HCT116 (cell line): ENCODE measurements at regions of chr12 and their contacts with region 1.

Region 1: DNA sequence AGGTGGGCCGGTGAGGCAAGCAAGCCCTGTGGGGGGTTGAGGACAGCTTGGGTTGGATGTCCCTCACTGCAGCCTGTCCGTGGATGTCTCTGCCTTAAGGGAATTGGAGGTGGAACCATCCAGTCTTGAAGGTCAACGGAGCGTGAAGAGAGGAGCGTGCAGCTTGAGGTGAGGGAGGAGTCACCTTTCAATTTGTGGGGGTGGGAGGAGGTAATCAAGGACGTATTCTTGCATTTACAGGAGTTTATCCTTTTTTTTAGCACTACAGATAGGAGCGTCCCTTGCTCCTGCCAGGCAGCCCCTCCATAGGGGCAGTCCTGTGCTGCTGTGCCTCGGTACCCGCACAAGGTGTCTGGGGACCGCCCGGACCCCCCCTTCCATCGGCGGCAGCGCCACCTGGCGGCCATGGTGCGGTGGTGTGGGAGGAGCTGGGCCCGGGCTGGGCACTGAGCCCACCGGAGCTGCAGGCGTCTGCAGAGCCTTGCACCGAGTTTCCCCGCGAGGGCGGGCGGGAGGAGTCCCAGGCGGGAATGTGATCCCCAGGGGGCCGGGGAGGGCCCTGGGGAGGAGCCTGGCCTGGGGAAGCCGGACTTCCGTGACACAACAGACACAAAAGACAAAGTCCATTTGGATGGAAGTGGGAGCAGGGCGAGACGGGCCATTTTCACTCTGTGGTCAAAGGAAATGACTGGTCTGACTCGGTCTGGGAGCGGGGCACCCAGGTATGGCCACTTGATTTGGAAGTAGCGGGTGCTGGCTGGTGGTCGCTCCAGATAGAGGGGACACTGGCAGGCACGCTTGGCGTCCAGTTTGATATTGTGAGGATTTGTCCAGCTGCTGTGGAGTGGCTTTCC is 923 bp downstream of the DNAJC22 start:
- DNase-seq: peak; percentile 89
- ATAC-seq: peak; percentile 95
- H3K4me3 ChIP-seq: peak overlapping the region; percentile 73 to 80
- H3K27ac ChIP-seq: peak overlapping the region; percentile 80
- H3K4me1 ChIP-seq: peaks cover 37 to 46% of the 10 kb centered on the region in 2 experiments
- H3K27me3 ChIP-seq: no peaks in the 10 kb centered on the region
- CTCF ChIP-seq: peak in 2 of 3 experiments; percentile 88 to 96; a peak in 4 of 6 replicates
- POLR2A ChIP-seq: peak; percentile 57
- RAD21 ChIP-seq: no peak

Region 2: DNA sequence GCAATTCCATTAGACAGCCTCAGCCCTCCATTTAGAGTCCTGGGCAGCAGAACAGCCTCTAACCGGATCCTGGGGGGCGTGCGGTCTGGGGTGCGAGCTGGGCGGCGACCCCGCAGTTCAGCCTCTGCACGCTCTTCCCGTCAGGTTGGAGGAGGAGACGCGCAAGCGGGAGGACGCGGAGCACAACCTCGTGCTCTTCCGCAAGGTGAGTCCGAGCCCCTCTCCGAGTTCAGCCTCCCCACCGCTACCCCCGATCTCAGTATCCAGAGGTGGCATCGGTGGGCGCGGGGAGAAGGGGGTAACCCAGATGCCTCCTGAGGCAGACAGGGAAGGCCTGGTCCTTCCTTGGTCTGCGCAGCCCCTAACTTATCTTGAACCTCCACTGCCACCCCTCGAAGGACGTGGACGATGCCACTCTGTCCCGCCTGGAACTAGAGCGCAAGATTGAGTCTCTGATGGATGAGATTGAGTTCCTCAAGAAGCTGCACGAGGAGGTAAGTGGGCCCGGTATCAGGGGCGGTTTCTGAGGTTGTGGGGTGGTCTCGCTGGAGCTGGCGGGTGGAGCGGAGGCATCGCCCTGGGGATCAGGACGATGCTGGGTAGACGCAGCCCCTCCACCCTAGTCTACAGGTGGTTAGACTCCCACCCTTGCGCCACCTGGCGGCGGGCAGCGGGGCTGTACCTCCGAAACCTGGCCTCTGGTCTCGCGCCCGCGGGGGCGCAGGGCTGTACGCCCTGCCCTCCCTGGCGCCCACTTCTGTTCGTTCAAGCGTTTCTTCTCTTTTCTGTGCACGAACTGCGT is 51.4 kb before region 1 on chr12:
- CTCF ChIA-PET with region 1: interaction called, 44 read pairs
- POLR2A ChIA-PET with region 1: no interaction called
- RAD21 ChIA-PET with region 1: no interaction called
- intact Hi-C with region 1: loop called (anchors 2 kb)
- DNase-seq: no peak
- ATAC-seq: peak; percentile 71
- H3K4me3 ChIP-seq: peak overlapping the region; percentile 47 to 48
- H3K27ac ChIP-seq: no peak overlapping the region; the same call in 1 of the 2 replicates
- H3K4me1 ChIP-seq: peaks cover 10 to 35% of the 10 kb centered on the region in 2 experiments; a peak in 3 of 4 replicates
- H3K27me3 ChIP-seq: no peaks in the 10 kb centered on the region
- CTCF ChIP-seq: peak; percentile 66 to 91 (median 90)
- POLR2A ChIP-seq: no peak
- RAD21 ChIP-seq: no peak

Region 3: DNA sequence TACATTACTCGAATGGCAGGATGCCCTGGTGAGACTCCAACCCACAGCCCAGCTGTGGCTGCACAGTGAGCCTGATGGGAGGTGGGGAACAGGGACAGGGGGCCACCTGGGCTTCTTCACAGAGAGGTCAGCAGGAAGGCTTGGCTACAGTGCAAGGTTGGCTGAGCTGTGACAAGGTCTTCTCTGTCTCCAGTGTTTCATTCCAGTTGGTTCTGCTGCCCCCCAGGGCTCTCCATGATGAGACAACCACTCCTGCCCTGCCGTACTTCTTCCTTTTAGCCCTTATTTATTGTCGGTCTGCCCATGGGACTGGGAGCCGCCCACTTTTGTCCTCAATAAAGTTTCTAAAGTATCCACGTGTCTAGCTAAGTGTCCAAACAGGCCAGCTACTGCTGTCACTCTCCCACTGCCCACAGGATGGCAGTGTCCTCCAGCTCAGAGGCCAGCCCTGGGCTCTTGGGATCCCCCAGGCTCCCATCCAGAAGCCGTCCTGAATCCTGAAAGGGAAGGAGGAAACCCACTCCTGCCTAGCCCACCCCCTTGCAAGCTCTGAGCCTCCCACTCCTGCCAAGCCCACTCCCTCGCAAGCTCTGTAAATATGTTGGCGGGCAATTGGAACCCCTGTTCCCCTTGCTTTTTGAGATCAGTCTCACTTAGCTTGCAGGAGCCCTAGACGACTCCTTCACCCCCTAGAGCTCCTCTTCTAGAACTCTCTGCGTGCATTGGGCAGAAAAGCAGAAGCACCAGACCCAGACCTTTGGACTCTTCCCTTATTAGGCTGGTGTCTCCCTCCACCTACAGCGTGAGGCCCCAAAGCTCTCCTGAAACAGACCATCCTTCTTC is 16.0 kb before region 1 on chr12:
- CTCF ChIA-PET with region 1: interaction called, 45 read pairs
- POLR2A ChIA-PET with region 1: interaction called, 8 read pairs
- RAD21 ChIA-PET with region 1: interaction called, 4 to 6 read pairs
- intact Hi-C with region 1: no loop called
- DNase-seq: peak; percentile 43
- ATAC-seq: peak; percentile 84
- H3K4me3 ChIP-seq: no peak overlapping the region
- H3K27ac ChIP-seq: peak overlapping the region; percentile 35
- H3K4me1 ChIP-seq: peaks cover 4 to 11% of the 10 kb centered on the region in 2 experiments; a peak in 2 of 4 replicates
- H3K27me3 ChIP-seq: no peaks in the 10 kb centered on the region
- CTCF ChIP-seq: peak; percentile 79 to 87 (median 86)
- POLR2A ChIP-seq: no peak
- RAD21 ChIP-seq: peak; percentile 86

Region 4: DNA sequence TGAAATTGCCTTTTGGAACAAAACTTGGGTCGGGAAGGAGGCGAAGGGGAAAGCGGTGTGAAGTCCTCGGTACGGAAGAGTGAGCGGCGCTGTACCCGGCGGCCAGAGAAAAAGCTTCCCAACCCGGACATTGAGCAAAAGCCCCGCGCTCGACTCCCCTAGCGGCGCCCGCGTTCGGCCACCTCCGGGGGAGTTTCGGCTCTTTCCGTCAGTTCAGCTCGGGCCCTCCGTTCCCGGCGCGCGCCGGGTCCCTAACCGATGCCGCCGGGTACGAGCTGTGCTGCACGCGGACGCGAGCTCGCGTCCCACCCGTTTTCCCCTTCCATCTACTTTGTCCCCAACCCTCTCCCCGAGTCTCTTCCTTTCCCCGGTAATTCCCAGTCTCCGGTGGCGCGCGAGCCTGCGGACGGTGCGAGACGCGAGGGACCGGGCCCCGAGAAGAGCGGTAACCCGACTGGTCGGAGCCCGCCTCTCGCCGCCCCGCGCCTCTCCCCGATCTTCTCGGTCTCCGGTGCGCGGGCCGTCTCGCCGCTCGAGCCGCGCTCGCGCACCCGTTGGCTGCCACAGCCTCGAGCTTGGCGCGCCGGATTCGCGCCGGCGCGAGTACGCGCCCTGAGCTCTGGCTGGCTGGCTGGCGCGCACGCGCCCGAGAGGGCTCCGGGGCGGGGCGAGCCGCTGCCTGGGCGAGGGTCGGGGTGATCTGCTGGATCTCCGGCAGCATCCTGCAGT is 19.2 kb after region 1 on chr12:
- CTCF ChIA-PET with region 1: interaction called, 11 read pairs
- POLR2A ChIA-PET with region 1: interaction called, 7 read pairs
- RAD21 ChIA-PET with region 1: no interaction called
- intact Hi-C with region 1: no loop called
- DNase-seq: peak; percentile 80
- ATAC-seq: peak; percentile 85
- H3K4me3 ChIP-seq: peak overlapping the region; percentile 65 to 71
- H3K27ac ChIP-seq: peak overlapping the region; percentile 99
- H3K4me1 ChIP-seq: peaks cover 38 to 52% of the 10 kb centered on the region in 2 experiments
- H3K27me3 ChIP-seq: no peaks in the 10 kb centered on the region
- CTCF ChIP-seq: 0 out of 6 replicates have a peak, but pooled peaks of 2 of the 3 experiments have one; percentile 11 to 12
- POLR2A ChIP-seq: peak; percentile 71
- RAD21 ChIP-seq: 0 out of 2 replicates have a peak, but pooled peaks have one; percentile 1

Region 5: GRCh38 chr12:49580572-49581535 is 233.2 kb after region 1 on chr12:
- CTCF ChIA-PET with region 1: interaction called, 14 read pairs
- POLR2A ChIA-PET with region 1: interaction called, 3 read pairs
- RAD21 ChIA-PET with region 1: no interaction called
- intact Hi-C with region 1: no loop called
- DNase-seq: peak; percentile 71
- ATAC-seq: peak; percentile 97
- H3K4me3 ChIP-seq: no peak overlapping the region
- H3K27ac ChIP-seq: no peak overlapping the region; the same call in 1 of the 2 replicates
- H3K4me1 ChIP-seq: peaks cover 7 to 11% of the 10 kb centered on the region in 2 experiments; a peak in 3 of 4 replicates
- H3K27me3 ChIP-seq: no peaks in the 10 kb centered on the region
- CTCF ChIP-seq: peak; percentile 90 to 92 (median 91)
- POLR2A ChIP-seq: no peak
- RAD21 ChIP-seq: peak; percentile 96